AG04450 (cell line): ENCODE measurements at regions of chr13 and their contacts with region 1.

Region 1: GRCh38 chr13:27826379-27827353 is 34.4 kb downstream of the GSX1 start:
- DNase-seq: peak; percentile 59
- H3K4me3 ChIP-seq: peak overlapping the region; percentile 49
- H3K27ac ChIP-seq: no peak overlapping the region
- H3K27me3 ChIP-seq: peaks cover 21% of the 10 kb centered on the region
- CTCF ChIP-seq: peak; percentile 88

Region 2: GRCh38 chr13:26985285-26985878 is 841.3 kb before region 1 on chr13:
- CTCF ChIA-PET with region 1: interaction called, 18 read pairs
- POLR2A ChIA-PET with region 1: no interaction called
- DNase-seq: peak; percentile 54
- H3K4me3 ChIP-seq: no peak overlapping the region
- H3K27ac ChIP-seq: no peak overlapping the region
- H3K27me3 ChIP-seq: no peaks in the 10 kb centered on the region
- CTCF ChIP-seq: peak; percentile 77

Region 3: DNA sequence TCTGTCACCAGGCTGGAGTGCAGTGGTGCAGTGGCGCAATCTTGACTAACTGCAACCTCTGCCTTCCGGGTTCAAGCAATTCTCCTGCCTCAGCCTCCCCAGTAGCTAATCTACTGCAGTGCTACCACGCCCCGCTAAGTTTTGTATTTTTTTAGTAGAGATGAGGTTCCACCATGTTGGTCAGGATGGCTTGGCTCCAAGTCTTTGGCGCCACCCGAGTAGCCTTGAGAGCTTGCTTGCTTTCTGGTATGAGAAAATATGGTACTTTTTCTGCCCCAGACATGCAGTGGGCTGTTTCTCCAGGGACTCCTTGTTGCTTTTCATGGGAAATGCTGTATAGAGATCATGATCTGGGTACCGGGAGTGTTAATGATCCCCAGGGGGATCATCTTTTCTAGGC is 436.8 kb before region 1 on chr13:
- CTCF ChIA-PET with region 1: interaction called, 25 read pairs
- POLR2A ChIA-PET with region 1: no interaction called
- DNase-seq: no peak
- H3K4me3 ChIP-seq: no peak overlapping the region
- H3K27ac ChIP-seq: no peak overlapping the region
- H3K27me3 ChIP-seq: peaks cover 5% of the 10 kb centered on the region
- CTCF ChIP-seq: no peak

Region 4: DNA sequence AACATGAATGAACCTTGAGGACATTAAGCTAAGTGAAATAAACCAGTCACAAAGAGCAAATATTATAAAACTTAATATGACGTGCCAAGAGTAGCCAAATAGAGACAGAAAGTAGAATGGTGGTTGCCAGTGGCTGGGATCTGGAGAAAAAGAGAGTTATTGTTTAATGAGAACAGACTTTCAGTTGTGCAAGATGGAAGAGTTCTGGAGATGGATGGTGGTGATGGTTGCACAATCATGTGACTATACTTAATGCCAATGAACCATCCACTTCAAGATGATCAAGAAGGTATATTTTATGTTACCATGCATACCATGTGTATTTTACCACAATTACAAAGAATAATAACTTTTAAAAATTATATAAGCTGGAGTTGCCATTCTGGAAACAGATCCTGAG is 310.6 kb before region 1 on chr13:
- CTCF ChIA-PET with region 1: interaction called, 11 read pairs
- POLR2A ChIA-PET with region 1: no interaction called
- DNase-seq: no peak
- H3K4me3 ChIP-seq: no peak overlapping the region
- H3K27ac ChIP-seq: no peak overlapping the region
- H3K27me3 ChIP-seq: peaks cover 2% of the 10 kb centered on the region
- CTCF ChIP-seq: no peak

Region 5: DNA sequence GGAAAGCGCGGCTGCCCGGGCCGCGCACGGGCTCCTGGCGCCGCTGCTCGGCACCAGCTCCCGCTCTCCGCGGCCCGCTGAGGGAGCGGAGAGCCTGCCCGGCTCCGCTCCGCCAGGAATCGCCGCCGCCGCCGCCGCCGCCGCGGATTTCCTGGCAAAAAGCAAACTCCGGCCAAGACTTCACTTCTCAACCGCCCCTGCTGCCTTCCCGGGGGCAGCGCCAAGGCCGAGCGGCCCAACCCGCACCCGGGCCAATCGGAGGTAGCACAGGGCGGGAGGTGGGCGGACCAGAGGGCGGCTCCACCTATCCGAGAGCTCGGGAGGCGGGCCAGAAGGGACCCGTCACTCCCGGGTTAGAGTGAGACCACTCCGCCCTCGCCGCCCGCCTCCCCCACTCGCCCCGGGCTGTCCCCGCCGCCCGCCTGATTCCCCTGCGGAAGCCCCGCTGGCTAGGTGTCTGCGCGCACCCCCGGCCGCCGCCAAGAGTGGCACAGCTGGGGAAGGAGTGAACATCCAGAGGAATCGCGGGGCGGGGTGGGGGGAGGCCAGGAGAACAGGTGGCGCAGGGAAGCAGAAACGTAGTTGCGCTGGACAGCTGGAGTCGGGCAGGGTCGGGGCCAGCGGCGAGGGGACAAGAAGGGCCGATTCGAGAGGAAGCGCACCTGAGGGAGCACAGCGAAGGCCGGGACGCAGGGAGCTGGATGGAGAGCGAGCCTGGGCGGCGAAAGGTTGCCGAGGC is 206.1 kb before region 1 on chr13 and contains the start of gene LNX2:
- CTCF ChIA-PET with region 1: interaction called, 18 read pairs
- POLR2A ChIA-PET with region 1: no interaction called
- DNase-seq: peak; percentile 90
- H3K4me3 ChIP-seq: peak within 1 kb of the TSS; percentile 88
- H3K27ac ChIP-seq: peak within 1 kb of the TSS; percentile 80
- H3K27me3 ChIP-seq: no peaks in the 10 kb centered on the region
- CTCF ChIP-seq: no peak
- polyA plus RNA-seq, gene LNX2: 6.2 and 6.9 TPM in 2 replicates

Region 6: GRCh38 chr13:27631156-27631555 is 195.5 kb before region 1 on chr13:
- CTCF ChIA-PET with region 1: no interaction called
- POLR2A ChIA-PET with region 1: no interaction called
- DNase-seq: no peak
- H3K4me3 ChIP-seq: no peak overlapping the region
- H3K27ac ChIP-seq: no peak overlapping the region
- H3K27me3 ChIP-seq: no peaks in the 10 kb centered on the region
- CTCF ChIP-seq: no peak

Region 7: GRCh38 chr13:27868641-27869435 is 42.2 kb after region 1 on chr13:
- CTCF ChIA-PET with region 1: interaction called, 13 read pairs
- POLR2A ChIA-PET with region 1: no interaction called
- DNase-seq: no peak
- H3K4me3 ChIP-seq: no peak overlapping the region
- H3K27ac ChIP-seq: no peak overlapping the region
- H3K27me3 ChIP-seq: peaks cover 2% of the 10 kb centered on the region
- CTCF ChIP-seq: peak; percentile 64